OCI-LY7 (cell line): ENCODE measurements at regions of chr14 and their contacts with region 1.

Region 1: GRCh38 chr14:23174276-23175184 is 8.9 kb downstream of the SLC7A8 start:
- DNase-seq: no peak
- H3K4me3 ChIP-seq: no peak overlapping the region
- H3K27ac ChIP-seq: no peak overlapping the region
- H3K4me1 ChIP-seq: peaks cover 9% of the 10 kb centered on the region
- CTCF ChIP-seq: no peak

Region 2: DNA sequence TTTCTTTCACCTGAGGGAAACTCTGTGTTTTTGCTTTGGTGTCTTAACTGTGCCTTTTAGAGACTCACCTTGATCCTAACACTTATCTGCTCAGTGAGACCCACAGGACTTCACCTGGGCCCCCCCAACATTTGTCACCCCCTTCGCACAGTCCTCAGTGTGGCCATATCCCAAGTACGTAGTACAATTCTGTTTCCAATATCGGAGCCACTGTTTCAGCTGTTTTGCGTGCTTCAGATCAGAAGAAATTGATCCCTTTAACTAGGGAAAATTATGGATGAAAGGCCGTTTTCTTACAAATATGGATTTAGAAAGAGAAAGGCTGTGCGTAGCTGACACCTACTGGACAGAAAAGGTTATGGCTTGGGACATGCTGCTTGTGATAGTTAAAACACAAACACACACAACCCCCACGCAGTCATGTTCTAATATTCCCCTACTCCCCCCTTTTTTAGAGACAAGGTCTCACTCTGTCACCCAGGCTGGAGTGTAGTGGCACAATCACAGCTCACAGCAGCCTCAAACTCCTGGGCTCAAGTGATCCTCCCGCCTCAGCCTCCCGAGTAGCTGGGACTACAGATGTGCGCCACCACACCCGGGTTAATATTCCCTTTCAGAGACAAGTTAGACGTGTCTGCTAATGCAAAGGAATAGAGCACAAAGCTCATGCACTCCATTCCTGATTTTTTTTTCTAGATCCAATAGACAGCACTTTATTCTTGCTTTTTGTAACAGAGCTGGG is 12.6 kb after region 1 on chr14:
- CTCF ChIA-PET with region 1: interaction called, 4 read pairs
- POLR2A ChIA-PET with region 1: interaction called, 10 read pairs
- intact Hi-C with region 1: no loop called
- DNase-seq: peak; percentile 65
- H3K4me3 ChIP-seq: no peak overlapping the region
- H3K27ac ChIP-seq: no peak overlapping the region
- H3K4me1 ChIP-seq: peaks cover 16% of the 10 kb centered on the region
- CTCF ChIP-seq: peak; percentile 92

Region 3: GRCh38 chr14:23195550-23196101 is 21.1 kb after region 1 on chr14:
- CTCF ChIA-PET with region 1: no interaction called
- POLR2A ChIA-PET with region 1: interaction called, 10 read pairs
- intact Hi-C with region 1: no loop called
- DNase-seq: no peak
- H3K4me3 ChIP-seq: no peak overlapping the region
- H3K27ac ChIP-seq: no peak overlapping the region
- H3K4me1 ChIP-seq: no peaks in the 10 kb centered on the region
- CTCF ChIP-seq: no peak